SK-N-SH (cell line): ENCODE measurements at regions of chr10 and their contacts with region 1.

Region 1: DNA sequence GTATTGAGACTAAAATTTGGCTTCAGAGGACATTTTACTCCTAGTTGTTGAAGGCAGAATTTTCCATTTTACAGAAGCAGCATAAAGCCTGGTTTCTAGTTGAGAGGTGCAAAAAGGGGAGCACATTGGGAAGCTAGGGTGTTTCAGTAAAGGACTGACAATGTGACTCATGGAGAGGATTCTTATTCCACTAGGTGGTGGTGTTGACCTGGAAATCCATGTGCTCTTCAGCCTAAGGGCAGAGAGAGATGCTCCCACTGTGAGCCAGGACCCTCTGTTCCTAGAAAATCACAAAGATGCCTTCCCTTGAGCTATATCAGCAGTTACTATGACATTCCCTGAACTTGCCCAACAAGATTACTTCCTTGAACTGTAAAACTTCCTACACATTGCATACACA is 687.8 kb downstream of the IPMK start:
- DNase-seq: peak; percentile 10
- H3K4me3 ChIP-seq: no peak overlapping the region
- H3K27ac ChIP-seq: no peak overlapping the region
- H3K4me1 ChIP-seq: no peaks in the 10 kb centered on the region
- H3K27me3 ChIP-seq: no peaks in the 10 kb centered on the region
- CTCF ChIP-seq: peak; percentile 60
- EP300 ChIP-seq: no peak
- RAD21 ChIP-seq: peak; percentile 70

Region 2: GRCh38 chr10:58064714-58065528 is 485.0 kb after region 1 on chr10:
- CTCF ChIA-PET with region 1: interaction called, 11 read pairs
- POLR2A ChIA-PET with region 1: no interaction called
- DNase-seq: peak; percentile 43
- H3K4me3 ChIP-seq: no peak overlapping the region
- H3K27ac ChIP-seq: no peak overlapping the region
- H3K4me1 ChIP-seq: no peaks in the 10 kb centered on the region; a peak in 1 of 4 replicates
- H3K27me3 ChIP-seq: no peaks in the 10 kb centered on the region; the same call in 1 of the 2 replicates
- CTCF ChIP-seq: peak; percentile 84
- EP300 ChIP-seq: no peak
- RAD21 ChIP-seq: peak; percentile 95